Activated CD4-positive, alpha-beta memory T cell treated with anti-CD3 and anti-CD28 coated beads for 36 hours (primary cell): ENCODE measurements at regions of chr10 and their contacts with region 1.

Region 1: DNA sequence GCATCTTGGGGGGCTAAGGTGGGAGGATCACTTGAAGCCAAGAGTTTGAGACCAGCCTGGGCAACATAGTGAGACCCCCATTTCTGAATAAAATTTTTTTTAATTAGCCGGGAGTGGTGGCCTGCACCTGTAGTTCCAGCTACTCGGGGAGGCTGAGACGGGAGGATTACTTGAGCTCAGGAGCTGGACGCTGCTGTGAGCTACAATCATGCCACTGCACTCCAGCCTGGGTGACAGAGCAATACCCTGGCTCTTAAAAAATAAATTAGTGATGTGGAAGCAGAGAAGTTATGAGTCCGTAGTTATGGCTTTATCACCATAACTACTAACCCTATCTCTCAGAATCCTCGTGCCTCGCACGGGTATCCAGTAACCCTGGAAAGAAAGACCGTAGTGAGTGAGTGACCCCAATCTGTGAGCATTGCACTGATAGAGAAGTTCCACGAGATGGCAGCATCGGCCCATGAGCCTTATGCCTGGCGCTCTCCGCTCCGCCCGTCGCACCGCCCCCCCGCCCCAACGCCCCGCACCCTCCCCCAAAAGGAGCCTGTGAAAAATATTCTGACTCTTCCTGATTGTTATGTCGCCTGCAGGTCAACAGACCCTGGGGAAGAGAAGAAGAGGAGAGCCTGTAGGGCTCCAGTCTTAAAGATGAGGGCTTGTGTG is 4.9 kb upstream of the SLC29A3 start:
- DNase-seq: peak; percentile 67
- H3K4me3 Mint-ChIP-seq: no peak overlapping the region
- H3K27ac Mint-ChIP-seq: no peak overlapping the region
- H3K4me1 Mint-ChIP-seq: peaks cover 9% of the 10 kb centered on the region
- H3K27me3 Mint-ChIP-seq: peaks cover 7% of the 10 kb centered on the region

Region 2: GRCh38 chr10:71378336-71379117 is 64.4 kb after region 1 on chr10:
- CTCF ChIA-PET with region 1: interaction called, 21 read pairs
- POLR2A ChIA-PET with region 1: interaction called, 5 read pairs
- intact Hi-C with region 1: loop called (anchors 1 kb)
- DNase-seq: no peak
- H3K4me3 Mint-ChIP-seq: no peak overlapping the region
- H3K27ac Mint-ChIP-seq: no peak overlapping the region
- H3K4me1 Mint-ChIP-seq: peaks cover 7% of the 10 kb centered on the region
- H3K27me3 Mint-ChIP-seq: no peaks in the 10 kb centered on the region

Region 3: DNA sequence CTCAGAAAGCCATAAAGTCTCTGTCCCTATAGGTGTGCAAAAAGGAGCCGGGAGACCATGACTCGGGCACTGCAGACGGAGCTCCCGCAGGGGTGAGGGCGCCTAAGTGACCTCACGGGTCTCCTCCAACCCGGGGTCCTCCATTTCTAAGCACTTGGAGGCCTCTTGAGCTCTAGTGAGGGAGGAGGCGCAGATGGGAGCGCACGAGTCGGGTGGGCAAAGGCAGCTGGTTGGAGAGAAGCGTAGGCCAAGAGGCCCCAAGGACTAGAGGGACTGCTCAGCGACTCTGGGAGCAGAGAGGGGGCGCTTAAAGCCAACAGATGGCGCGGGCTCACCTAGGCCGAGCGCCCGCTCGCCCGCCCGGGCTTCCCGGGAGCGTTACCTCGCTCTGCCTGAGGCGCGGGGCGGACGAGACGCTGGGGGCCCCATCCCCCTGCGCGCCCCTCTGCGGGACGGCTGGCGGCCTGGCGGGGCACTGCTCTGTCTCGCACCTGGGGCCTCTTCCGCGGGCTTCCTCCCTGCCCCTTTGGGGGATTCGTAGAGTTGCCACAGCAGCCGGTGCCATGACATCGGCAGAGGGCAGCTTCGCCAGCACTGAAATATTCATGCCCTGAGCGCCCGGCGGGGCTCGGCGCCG is 82.0 kb after region 1 on chr10:
- CTCF ChIA-PET with region 1: interaction called, 3 read pairs
- POLR2A ChIA-PET with region 1: no interaction called
- intact Hi-C with region 1: loop called (anchors 1 kb)
- DNase-seq: peak; percentile 50
- H3K4me3 Mint-ChIP-seq: no peak overlapping the region
- H3K27ac Mint-ChIP-seq: no peak overlapping the region
- H3K4me1 Mint-ChIP-seq: peaks cover 7% of the 10 kb centered on the region
- H3K27me3 Mint-ChIP-seq: peaks cover 51% of the 10 kb centered on the region

Region 4: DNA sequence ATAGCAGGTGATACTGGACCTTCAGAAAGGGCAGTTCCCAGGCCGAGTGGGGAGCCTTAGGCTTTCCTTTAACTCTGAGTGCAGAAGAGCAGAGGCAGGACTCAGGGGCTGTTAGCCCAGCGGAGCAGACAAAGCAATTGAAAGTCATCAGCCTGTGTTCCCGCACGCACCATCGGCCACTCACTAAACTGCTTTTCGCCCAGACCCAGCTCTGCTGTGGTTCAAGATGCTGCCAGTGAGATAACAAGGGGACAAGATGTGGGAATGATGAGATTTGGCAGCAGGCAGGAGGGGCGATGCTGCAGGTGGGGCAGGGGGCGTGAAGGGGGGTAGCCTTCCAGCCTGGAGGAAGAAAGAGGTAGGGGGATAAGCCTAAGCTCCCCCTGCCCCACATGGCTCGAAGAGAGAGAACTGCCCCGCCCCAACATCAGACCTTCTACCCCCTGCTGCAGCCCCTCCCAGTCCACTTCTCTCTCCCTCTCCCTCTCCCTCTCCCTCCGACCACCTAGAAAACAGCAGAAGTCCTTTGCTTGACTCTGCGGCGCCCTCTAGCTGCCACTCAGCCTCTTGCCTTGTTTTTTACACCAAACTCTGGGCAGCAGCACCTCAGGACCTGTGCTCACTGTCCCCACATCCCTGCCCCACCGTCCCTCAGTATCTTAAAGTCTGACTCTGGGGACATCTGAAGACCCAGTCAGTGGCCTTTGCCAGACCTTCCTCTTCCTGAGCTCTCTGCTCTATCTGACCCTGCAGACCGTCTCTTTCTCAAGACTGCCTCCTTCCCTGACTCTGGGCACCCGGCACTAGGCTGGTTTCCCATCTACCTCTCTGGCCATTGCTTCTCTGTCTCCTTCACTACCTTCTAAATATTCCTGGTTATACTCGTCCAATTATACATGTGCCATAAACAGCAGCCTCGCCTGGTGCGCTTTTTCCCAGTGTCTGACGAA is 294.9 kb after region 1 on chr10:
- CTCF ChIA-PET with region 1: interaction called, 11 read pairs
- POLR2A ChIA-PET with region 1: no interaction called
- intact Hi-C with region 1: loop called (anchors 10 kb)
- DNase-seq: peak; percentile 78
- H3K4me3 Mint-ChIP-seq: no peak overlapping the region
- H3K27ac Mint-ChIP-seq: no peak overlapping the region
- H3K4me1 Mint-ChIP-seq: no peaks in the 10 kb centered on the region
- H3K27me3 Mint-ChIP-seq: peaks cover 1% of the 10 kb centered on the region

Region 5: GRCh38 chr10:71659111-71659634 is 345.0 kb after region 1 on chr10:
- CTCF ChIA-PET with region 1: no interaction called
- POLR2A ChIA-PET with region 1: no interaction called
- intact Hi-C with region 1: no loop called
- DNase-seq: no peak
- H3K4me3 Mint-ChIP-seq: no peak overlapping the region
- H3K27ac Mint-ChIP-seq: no peak overlapping the region
- H3K4me1 Mint-ChIP-seq: no peaks in the 10 kb centered on the region
- H3K27me3 Mint-ChIP-seq: no peaks in the 10 kb centered on the region

Region 6: DNA sequence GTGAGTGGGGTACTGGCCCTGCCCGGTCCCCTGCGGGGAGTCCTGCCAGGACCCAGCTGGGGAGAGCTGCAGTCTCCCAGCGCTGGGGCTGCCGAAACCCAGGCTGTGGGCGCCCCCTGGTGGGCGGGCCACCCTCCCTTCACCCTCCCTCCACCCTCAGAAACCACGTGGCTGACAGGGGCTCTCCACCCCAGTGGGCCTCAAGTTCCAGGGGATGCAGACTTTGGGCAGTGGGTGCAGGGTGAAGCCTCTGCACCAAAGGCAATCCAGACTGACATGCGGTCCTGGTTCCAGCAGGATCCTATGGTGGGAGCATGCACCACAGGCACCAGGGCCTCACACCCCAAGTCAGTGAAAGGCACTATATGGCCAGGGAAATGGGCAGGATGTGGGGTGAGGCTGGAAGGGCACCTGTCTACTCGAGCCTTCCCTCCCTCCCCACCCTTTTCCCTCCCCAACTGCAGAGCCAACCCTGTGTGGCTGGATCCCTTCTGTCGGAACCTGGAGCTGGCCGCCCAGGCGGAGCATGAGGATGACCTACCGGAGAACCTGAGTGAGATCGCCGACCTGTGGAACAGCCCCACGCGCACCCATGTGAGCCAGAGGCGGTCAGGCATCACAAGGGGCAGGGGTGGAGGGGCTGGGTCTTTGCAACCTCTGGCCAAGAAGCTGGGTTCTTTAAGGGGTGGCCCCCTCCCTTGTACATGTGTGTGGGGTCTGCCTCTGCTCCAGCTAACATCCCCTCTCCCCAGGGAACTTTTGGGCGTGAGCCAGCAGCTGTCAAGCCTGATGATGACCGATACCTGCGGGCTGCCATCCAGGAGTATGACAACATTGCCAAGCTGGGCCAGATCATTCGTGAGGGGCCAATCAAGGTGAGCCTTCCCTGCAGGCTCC is 498.1 kb after region 1 on chr10:
- CTCF ChIA-PET with region 1: interaction called, 20 read pairs
- POLR2A ChIA-PET with region 1: no interaction called
- intact Hi-C with region 1: no loop called
- DNase-seq: peak; percentile 83
- H3K4me3 Mint-ChIP-seq: no peak overlapping the region
- H3K27ac Mint-ChIP-seq: no peak overlapping the region
- H3K4me1 Mint-ChIP-seq: no peaks in the 10 kb centered on the region
- H3K27me3 Mint-ChIP-seq: no peaks in the 10 kb centered on the region